GM13977 (cell line): ENCODE measurements at regions of chr12 and their contacts with region 1.

Region 1: DNA sequence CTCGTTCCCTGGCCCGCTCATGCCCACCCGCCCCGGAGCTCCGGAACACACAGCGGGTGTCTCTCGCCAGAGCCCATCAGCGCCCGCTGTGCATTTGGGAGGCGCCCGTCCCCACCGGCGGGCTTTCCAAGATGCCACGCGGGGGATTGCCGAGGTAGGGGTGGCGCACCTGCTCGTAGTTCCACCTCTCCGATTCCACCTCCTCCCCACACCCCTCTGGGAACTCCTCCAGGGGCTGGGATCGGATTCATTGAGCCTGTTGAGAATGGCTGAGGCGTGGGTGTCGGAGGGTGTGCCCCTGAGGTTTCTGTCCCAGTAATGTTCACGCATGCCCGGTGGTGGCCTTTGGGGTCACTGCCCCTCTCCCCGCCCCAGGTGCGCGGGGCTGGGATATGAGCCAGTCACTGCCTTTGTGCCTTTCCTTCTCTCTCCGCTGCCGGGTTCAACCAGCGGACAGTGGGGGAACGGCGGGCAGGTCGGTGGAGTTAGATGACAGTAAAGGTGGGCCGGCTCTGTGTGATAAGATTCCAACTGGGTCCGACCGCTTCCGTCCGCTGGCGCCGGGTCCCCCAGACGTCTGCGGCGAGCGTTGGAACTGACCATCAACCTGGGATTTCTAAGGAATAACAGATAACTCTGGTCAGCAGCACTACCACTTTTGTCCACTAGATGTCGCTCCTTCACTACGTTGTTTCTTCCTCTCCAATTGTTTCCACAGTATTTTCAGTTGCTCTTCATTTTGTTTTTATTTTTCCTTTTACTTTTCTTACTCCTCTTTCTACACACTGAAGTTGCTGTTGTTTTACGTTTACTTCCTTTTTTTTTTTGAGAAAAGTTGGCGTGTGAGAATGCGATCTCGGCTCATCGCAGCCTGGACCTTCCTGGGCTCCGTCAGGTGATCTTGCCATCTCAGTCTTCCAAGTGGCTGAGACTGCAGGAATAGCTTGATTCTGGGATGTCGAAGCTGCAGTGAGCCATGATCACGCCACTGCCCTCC is 178.1 kb upstream of the ALG10B start:
- DNase-seq: peak; percentile 73
- CTCF ChIP-seq: peak; percentile 88

Region 2: DNA sequence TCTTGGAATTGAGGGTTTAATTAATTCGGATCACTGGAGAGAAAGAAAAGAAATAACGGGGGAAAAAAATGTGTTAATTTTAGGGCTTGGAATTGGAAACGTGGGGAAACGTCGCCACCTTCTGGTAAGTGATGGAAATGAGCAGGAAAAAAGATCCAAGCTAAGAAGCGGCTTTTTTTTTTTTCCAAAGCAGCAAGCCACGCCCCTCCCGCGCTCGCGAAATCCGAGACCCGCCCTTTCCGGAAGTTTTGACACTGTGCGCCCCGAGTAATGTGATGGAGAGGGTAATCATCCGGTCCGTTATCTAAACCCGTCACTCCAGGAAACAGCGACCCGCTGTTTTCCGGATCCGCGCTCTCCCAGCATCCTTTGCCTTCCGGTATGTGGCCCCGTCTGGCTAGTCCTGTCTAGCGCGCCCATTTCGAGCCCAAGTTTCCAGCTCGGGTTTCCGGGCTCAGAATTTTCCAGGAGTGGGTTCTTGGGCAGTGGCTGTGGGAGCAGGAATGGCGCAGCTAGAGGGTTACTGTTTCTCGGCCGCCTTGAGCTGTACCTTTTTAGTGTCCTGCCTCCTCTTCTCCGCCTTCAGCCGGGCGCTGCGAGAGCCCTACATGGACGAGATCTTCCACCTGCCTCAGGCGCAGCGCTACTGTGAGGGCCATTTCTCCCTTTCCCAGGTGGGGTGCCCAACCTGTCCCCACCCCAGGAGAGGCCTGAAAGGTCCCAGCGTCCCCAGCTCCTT is 178.0 kb after region 1 on chr12 and contains the start of gene ALG10B:
- in situ Hi-C with region 1: loop called (anchors 10 kb)
- DNase-seq: peak; percentile 78
- CTCF ChIP-seq: peak; percentile 65